IMR-90 (cell line): ENCODE measurements at regions of chr5 and their contacts with region 1.

Region 1: GRCh38 chr5:120388016-120388781 is 75.9 kb upstream of the PRR16 start:
- DNase-seq: peak; percentile 95
- ATAC-seq: peak; percentile 87
- H3K4me3 ChIP-seq: no peak overlapping the region
- H3K27ac ChIP-seq: peak overlapping the region; percentile 92
- H3K4me1 ChIP-seq: peaks cover 7% of the 10 kb centered on the region
- H3K27me3 ChIP-seq: no peaks in the 10 kb centered on the region
- CTCF ChIP-seq: no peak
- POLR2A ChIP-seq: no peak
- RAD21 ChIP-seq: no peak

Region 2: GRCh38 chr5:120446068-120446492 is 57.9 kb after region 1 on chr5:
- CTCF ChIA-PET with region 1: no interaction called
- POLR2A ChIA-PET with region 1: no interaction called
- dilution Hi-C with region 1: no loop called
- in situ Hi-C with region 1: no loop called
- intact Hi-C with region 1: loop called (anchors 5 kb)
- DNase-seq: peak; percentile 96
- ATAC-seq: peak; percentile 90
- H3K4me3 ChIP-seq: no peak overlapping the region
- H3K27ac ChIP-seq: peak overlapping the region; percentile 46; the same call in 1 of the 2 replicates
- H3K4me1 ChIP-seq: peaks cover 5% of the 10 kb centered on the region
- H3K27me3 ChIP-seq: no peaks in the 10 kb centered on the region
- CTCF ChIP-seq: no peak
- POLR2A ChIP-seq: no peak
- RAD21 ChIP-seq: no peak

Region 3: GRCh38 chr5:120568711-120569110 is 180.5 kb after region 1 on chr5:
- CTCF ChIA-PET with region 1: no interaction called
- POLR2A ChIA-PET with region 1: interaction called, 13 read pairs
- dilution Hi-C with region 1: no loop called
- in situ Hi-C with region 1: no loop called
- intact Hi-C with region 1: no loop called
- DNase-seq: peak; percentile 29
- ATAC-seq: no peak; the same call in 1 of the 2 replicates
- H3K4me3 ChIP-seq: no peak overlapping the region
- H3K27ac ChIP-seq: no peak overlapping the region
- H3K4me1 ChIP-seq: peaks cover 8% of the 10 kb centered on the region
- H3K27me3 ChIP-seq: no peaks in the 10 kb centered on the region
- CTCF ChIP-seq: no peak
- POLR2A ChIP-seq: no peak
- RAD21 ChIP-seq: no peak